GM10248 (cell line): ENCODE measurements at regions of chr19 and their contacts with region 1.

Region 1: DNA sequence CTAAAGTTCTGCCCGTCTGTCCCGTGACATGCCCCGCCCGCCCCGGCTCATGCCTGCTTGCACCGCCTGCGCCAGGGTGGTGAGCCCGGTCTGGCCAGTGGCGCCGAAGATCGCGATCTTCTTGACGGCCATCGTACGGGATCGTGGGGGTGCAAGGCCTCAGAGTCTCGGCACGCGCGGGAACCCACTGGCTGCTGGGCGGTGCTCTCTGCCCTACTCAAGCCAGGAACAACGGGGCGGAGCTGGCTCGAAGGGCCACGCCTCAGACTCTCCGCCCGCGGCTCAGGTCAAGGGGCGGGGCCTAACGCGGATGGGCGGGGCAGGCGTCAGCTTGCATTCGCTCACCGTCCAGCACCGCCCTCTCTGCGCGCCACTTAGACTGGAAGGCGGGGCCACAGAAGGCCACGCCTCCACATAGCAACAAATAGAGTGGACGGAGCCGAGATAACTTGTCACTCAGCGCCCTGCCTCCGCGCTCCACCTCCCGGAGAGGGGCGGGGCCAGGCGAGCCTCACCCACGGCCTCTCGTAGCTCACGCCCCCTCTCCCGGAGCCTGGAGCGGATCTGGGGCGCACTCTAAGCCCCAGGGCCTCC is at the start of gene BLVRB:
- DNase-seq: peak; percentile 99
- CTCF ChIP-seq: no peak

Region 2: GRCh38 chr19:40241809-40242384 is 223.8 kb before region 1 on chr19:
- CTCF ChIA-PET with region 1: no interaction called
- POLR2A ChIA-PET with region 1: no interaction called
- DNase-seq: no peak
- CTCF ChIP-seq: no peak

Region 3: DNA sequence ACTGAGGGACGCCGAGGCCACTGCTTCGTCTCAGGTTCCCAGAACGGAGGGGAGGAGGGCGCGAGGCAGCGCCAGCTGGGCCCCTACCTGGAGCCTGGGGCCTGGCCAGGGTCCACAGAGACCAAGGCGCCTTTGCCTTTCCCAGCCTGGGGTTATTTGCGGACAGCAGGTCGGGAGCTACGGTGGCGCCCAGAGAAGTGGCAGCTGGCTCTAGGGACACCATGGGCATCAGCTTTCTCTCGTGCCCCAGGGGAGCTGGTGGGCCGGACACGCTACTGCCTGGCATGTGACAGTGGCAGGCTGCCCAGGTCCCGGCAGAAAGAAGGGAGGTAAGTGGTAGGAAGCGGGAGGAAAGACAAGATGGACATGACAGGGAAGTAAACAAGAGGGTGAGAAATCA is 199.5 kb before region 1 on chr19:
- CTCF ChIA-PET with region 1: no interaction called
- POLR2A ChIA-PET with region 1: no interaction called
- DNase-seq: no peak
- CTCF ChIP-seq: no peak

Region 4: DNA sequence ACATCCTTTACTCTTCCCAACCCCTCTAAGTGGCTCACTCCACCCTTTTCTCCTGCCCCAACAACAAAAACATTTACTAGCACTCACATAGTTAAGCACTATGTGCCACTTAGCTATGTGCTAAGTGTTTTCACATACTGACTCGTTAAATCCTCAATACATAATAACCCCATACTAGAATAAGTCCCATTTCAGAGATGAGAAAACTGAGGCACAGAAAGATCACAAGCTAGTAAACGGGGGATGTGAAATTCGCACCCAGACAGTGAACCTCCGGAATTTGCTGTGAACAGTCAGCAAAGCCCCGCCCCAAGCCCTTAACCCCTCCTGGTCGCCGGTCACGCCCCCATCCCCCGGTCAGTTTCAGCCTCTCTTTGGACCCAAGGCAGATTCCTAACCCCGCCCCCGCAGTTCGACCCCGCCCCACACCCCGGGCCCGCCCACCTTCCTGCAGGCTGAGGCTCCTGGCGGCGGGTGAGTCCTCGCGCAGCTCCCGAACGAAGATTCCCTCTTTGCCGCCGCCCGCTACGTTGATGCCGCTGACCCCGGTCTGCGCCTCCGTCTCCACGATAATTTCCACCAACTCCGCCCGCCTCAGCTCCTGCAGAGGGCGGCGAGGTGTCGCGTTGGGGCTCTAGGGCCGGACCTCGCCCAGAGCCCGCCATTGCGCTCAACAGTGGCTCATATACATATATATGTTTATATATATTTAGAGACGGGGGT is 62.2 kb before region 1 on chr19:
- CTCF ChIA-PET with region 1: interaction called, 13 read pairs
- POLR2A ChIA-PET with region 1: interaction called, 3 read pairs
- DNase-seq: peak; percentile 98
- CTCF ChIP-seq: no peak

Region 5: DNA sequence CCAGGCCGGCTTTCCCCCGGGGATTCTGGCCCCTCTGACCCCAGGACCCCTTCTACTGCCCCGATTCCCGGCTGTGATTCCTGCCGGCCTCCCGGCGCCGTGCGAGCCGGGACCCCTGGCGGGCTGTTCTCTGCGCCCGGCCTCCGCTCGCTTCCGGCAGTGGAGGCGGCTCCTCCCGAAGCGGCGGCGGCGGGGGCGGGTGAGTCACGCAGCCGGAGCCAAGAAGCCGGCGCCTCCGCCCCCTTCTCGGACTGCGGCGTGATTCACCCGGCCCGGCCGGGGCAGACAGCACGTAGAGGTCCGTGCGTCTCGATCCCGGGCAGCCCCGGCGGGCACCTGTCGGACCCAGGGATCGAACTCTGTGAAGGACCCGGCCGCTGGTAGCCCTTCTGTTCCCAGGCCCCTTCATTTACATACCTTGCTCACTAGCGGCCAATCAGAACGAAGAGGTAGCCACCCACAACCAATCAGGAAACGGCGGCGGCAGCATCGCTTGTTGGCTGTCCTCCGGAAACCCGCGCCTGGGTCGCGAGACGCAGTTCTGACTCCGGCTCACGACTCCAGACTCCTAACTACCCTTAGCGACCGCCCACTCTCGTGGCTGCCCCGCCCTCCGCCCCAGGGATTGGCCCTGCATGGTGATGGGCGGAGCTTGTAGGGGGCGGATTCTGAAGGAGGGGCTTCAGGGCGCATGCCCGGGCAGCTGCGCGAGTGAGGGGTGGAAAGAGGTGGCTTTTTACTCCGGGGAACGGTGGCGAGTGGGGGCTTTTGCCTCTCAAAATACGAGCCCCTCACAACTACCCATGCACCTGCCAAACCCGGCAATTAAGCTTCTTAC is 40.0 kb before region 1 on chr19 and contains the start of gene SERTAD1:
- CTCF ChIA-PET with region 1: interaction called, 42 read pairs
- POLR2A ChIA-PET with region 1: interaction called, 14 read pairs
- DNase-seq: peak; percentile 99
- CTCF ChIP-seq: peak; percentile 59

Region 6: DNA sequence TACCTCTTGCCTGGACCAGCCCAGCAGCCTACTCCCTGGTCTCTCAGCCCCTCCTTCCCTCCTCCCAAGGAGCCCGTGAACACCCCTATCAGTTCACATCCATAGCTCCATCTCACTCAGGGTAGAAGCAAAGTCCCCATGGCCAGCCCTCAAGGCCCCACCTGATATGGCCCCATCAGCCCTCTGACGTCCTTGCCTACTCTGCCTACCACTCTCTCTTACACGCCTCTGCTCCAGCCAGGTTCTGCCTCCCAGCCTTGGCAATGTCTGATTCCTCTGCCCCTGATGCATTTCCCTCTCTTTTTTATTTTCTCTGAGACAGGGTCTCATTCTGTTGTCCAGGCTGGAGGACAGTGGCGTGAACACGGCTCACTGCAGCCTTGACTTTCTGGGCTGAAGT is 13.6 kb before region 1 on chr19:
- CTCF ChIA-PET with region 1: interaction called, 52 read pairs
- POLR2A ChIA-PET with region 1: interaction called, 4 read pairs
- DNase-seq: no peak
- CTCF ChIP-seq: no peak

Region 7: GRCh38 chr19:40502647-40503319 is 37.1 kb after region 1 on chr19:
- CTCF ChIA-PET with region 1: interaction called, 18 read pairs
- POLR2A ChIA-PET with region 1: no interaction called
- DNase-seq: peak; percentile 16
- CTCF ChIP-seq: no peak

Region 8: DNA sequence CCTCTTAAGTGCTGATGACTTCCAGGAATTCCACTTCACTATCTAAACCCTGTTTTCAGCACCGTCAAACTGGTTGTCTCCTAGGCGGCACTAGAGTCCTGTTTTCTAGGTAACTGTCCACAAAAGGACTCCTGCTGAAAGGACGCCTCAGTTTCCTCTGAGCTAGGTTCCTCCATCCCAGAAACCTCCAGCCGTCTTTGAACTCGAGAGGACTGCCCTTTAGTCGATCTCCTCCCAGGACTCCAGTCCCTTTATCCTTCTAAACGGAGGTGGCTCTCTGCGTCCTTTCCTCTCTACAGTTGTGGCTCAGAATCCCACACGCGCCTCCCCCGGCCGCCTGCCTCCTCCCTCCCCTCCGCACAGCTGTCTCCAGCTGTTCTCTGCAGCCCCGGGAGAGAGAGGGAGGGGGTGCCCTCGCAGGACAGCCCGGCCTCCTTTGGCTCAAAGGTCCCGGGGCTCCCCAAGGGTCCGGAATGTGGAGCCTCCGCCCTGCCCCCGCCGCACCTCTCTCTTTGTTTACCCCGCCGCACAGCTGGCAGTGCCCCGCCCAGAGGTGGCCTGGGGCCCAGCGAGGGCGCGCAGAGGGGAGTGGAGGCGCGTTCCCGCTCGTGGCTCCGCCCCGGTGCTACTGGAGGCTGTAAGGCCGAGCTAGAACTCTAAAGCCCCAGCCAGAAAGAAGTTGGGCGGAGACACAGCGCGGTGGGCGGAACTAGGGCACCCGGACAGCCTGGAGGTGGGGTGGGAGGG is 137.9 kb after region 1 on chr19:
- CTCF ChIA-PET with region 1: interaction called, 22 read pairs
- POLR2A ChIA-PET with region 1: no interaction called
- DNase-seq: peak; percentile 94
- CTCF ChIP-seq: no peak